ENCODE measurements at regions of chr13 and their contacts with region 1.

Region 1: DNA sequence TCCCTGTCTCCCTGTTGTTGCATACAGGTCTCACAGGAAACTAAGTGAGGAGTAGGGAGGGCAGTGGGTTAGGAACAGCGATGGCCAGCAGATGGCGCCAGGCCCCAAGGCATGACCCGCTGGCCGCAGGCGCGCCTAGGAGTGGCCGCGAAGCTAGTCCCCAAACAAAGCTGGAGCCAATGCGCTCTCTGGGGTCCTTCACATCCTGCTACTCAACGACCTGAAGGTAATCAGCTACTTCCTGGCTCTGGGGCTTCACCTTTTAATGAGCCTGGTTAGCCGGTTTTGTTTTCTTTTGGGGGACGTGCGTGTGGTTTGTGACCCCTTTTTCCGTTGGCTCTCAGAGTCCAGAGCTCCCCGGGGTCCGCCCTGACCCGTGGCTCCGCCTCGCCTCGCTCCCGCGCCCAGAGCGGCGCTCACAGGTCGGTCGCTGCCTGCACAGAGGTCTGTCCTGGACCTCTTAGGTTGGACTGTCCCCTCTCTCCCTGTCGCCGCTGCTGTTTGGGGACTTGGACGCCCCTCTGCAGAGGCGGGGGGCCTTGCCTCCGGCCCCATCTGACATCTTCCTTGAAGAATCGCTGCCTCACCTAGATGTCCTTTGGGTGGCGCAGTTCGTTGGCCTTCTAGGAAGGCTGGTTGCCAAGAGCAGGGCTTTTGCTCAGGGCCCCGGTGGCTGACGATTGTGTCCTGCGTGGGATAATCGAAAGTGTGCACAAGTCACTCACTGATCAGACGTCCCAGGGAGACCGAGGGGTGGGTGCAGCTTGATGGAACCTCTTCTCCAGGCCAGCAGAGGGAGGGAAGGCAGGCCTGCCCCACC is 62.1 kb upstream of the GTF3A start:
- DNase-seq: no peak
- H3K4me3 ChIP-seq: peak overlapping the region; percentile 64
- CTCF ChIP-seq: peak; percentile 97

Region 2: DNA sequence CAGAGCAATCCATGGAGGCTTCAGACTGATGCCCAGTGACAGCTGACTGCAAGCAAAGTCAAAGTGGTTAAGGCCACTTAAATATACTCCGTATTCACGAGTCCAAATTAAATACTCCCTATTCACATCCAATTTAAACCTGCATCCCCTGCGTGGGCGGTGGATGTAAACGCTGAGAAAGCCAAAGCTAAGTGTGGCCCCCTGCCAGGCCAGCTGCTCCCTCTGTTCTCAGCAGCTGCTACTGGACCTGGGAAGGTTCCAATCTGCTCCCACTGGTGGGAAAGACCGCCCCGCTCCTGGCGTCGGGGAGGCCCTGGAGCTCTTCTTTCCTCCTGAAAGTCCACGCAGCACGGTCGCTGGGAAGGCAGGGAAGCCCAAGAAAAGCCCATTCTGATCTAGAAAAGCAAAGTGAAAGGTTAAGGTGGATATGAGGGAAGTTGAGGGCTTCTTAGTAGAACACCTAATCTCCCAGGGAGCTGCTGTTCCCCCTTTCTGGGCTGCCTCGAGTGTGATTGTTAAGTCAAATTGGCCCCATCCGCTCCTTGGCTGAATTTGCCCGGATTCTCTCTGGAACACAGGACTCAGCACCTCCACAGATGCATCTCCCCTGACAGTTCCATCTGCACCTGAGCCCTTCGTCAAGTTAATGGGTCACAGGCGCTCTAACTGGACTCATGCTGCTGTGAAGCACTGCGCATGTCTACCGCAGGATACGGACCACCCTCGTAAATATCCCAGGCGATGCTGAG is 396.1 kb before region 1 on chr13:
- CTCF ChIA-PET with region 1: interaction called, 16 read pairs
- POLR2A ChIA-PET with region 1: no interaction called
- DNase-seq: no peak
- H3K4me3 ChIP-seq: no peak overlapping the region
- CTCF ChIP-seq: no peak

Region 3: GRCh38 chr13:26985285-26985878 is 376.9 kb before region 1 on chr13:
- CTCF ChIA-PET with region 1: interaction called, 457 read pairs
- POLR2A ChIA-PET with region 1: no interaction called
- DNase-seq: peak; percentile 29
- H3K4me3 ChIP-seq: no peak overlapping the region
- CTCF ChIP-seq: peak; percentile 66

Region 4: DNA sequence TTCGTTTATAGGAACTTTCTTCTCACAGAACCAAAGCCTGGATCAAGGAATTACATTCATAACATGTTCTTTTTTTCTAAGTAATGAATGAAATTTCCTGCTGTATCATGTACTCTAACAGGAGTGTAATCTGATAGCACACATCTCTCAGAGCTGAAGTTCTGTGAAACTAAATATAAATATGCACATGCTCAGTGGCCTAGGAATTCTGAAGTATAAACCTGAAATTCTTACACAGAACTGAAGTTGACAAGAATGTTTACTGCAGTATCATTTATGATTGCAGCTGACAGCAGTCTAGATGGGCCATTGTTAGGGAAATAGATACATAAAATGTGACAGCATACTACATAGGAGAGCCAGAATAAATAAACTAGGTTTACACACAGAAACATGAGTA is 245.1 kb before region 1 on chr13:
- CTCF ChIA-PET with region 1: no interaction called
- POLR2A ChIA-PET with region 1: no interaction called
- DNase-seq: no peak
- H3K4me3 ChIP-seq: no peak overlapping the region
- CTCF ChIP-seq: no peak

Region 5: GRCh38 chr13:27374650-27375049 is 12.4 kb after region 1 on chr13:
- CTCF ChIA-PET with region 1: interaction called, 193 read pairs
- POLR2A ChIA-PET with region 1: no interaction called
- DNase-seq: peak; percentile 40
- H3K4me3 ChIP-seq: no peak overlapping the region
- CTCF ChIP-seq: peak; percentile 76

Region 6: GRCh38 chr13:27839809-27840467 is 477.7 kb after region 1 on chr13:
- CTCF ChIA-PET with region 1: interaction called, 10 read pairs
- POLR2A ChIA-PET with region 1: no interaction called
- DNase-seq: no peak
- H3K4me3 ChIP-seq: no peak overlapping the region
- CTCF ChIP-seq: no peak

Measured in AG04449 (cell line).